KBM-7 (cell line): ENCODE measurements at regions of chr7 and their contacts with region 1.

Region 1: GRCh38 chr7:47945261-47946001 is 2.8 kb downstream of the PKD1L1 start:
- DNase-seq: peak; percentile 64

Region 2: GRCh38 chr7:47833211-47833610 is 112.2 kb before region 1 on chr7:
- in situ Hi-C with region 1: no loop called
- DNase-seq: no peak

Region 3: GRCh38 chr7:48109848-48110663 is 164.6 kb after region 1 on chr7:
- in situ Hi-C with region 1: loop called (anchors 10 kb)
- DNase-seq: peak; percentile 67